ENCODE measurements at regions of chr9 and their contacts with region 1.

Region 1: DNA sequence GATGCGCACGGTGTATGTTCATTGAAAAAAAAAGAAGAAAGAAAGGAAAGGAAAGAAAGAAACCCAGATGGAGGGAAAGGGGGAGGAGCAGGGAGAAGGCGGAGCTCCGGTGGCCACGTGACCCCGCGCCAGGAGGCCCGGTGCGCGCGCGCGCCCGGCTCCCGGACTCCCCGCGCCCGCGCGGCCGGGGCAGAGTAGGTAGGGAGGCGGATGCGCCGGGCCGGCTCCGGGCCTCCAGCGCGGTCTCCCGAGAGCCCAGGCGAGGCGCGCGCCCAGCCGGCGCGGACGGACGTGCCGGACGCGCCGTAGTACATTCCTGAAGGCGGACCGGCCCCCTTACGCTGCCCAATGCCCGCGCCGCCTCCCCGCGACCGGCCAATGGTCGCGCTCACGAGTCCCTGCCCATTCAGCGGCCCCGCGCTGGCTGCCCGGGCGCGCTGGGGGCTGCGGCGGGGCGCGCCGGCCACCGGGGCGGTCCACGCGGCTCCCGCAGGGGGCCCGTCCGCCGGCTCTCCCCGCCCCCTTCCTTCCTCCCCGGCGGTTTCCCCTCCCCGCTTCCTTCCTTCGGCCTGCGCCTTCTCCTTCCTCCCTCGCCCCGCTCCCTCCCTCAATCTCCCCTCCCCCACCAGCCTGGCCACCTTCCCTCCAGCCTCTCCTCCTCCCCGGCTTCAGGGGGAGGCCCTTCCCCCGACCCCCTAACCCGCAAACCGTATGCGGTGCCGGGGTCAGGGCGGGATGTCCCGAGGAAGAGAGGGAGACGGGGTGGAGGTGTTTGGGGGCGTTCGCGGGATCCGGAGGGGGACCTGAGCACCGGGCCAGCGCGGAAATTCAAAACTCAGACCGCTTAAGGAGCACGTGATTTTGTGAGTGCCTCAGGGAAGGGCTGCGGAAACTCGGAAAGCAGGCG is 5.8 kb downstream of the PTCH1 start:
- DNase-seq: peak; percentile 84 to 98
- H3K4me3 ChIP-seq: peak overlapping the region; percentile 98
- H3K27ac ChIP-seq: peak overlapping the region; percentile 80
- H3K4me1 ChIP-seq: peaks cover 12% of the 10 kb centered on the region; the same call in 1 of the 2 replicates
- H3K27me3 ChIP-seq: no peaks in the 10 kb centered on the region
- CTCF ChIP-seq: no peak

Region 2: DNA sequence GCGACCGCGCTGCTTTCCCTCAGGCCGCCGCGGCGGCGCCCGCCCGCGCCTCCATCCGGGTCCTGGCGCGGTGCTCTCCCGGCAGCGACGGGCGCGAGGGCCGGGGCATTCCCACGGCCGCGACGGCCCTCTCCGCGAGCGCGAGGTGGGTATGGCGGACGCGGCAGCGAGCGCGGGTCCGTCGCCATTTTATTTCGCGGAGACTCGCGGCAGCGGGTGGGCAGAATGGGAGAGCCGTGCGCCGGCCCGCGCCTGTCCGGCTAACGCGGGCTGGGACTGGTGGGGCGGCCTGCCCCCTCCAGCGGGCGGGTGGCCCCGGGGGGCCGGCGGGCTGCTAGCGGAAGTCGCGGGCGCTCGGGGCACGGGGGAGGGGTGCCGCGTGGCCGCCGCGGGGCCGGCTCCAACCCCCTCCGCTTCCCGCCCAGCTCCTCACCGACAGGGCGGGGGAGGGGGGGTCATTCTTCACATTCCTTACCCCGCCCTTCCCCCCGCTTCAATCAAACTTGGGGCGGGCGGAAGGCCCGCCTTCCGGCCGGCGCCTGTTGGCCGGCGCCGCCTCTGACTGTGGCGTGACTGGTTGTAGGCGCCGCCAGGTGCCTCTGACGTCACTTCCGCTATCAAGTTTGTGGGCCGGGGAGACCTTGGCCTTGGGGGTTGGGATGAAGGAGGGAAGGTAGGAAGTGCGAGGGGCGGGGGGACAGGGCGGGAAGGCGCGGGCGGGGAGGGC is 1344.6 kb before region 1 on chr9:
- CTCF ChIA-PET with region 1: no interaction called
- POLR2A ChIA-PET with region 1: no interaction called
- intact Hi-C with region 1: loop called (anchors 2 kb)
- DNase-seq: peak; percentile 94 to 98
- H3K4me3 ChIP-seq: peak overlapping the region; percentile 92
- H3K27ac ChIP-seq: peak overlapping the region; percentile 96
- H3K4me1 ChIP-seq: peaks cover 35% of the 10 kb centered on the region
- H3K27me3 ChIP-seq: no peaks in the 10 kb centered on the region
- CTCF ChIP-seq: no peak

Region 3: DNA sequence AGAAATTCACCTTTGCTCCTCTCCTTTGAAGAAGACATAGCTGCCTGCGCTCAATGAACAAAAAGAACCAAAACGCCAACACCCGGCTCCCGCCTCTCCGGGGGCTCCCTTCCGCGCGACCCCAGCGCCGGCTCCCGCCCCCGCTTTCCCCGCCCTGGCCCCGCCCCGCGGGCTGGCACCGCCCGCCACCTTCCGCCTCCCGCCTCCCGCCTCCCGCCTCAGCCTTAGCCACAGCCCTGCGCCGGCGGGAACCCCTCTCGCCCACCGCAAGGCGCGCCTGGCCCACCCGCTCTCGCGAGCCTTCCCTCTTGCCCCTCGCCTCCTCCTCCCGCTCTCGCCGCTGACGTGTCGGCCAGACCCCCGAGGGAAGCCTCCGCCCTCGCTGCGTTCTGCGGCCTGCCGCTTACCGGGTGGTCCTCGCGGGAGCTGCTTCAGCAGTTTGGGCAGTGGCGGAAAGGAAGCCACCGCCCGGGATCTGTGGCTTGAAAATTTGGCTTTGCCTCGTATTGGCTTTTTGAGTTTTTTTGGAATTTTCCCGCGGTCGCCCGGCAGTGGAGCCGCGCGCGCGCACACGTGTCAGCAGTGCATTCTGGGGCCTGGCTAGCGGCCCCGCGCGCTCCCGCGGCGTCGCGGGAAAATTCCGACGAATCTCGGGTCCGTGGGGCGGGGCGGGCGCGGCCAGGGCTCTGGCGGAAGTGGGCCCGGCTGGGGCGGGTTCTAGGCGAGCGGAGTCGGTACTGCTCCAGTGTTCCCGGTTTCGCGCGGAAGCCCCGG is 193.7 kb before region 1 on chr9 and contains the start of gene FANCC:
- CTCF ChIA-PET with region 1: no interaction called
- POLR2A ChIA-PET with region 1: no interaction called
- intact Hi-C with region 1: loop called (anchors 1 kb)
- DNase-seq: peak; percentile 73 to 91
- H3K4me3 ChIP-seq: peak within 1 kb of the TSS; percentile 80
- H3K27ac ChIP-seq: peak within 1 kb of the TSS; percentile 97
- H3K4me1 ChIP-seq: peaks cover 37% of the 10 kb centered on the region
- H3K27me3 ChIP-seq: no peaks in the 10 kb centered on the region
- CTCF ChIP-seq: no peak
- total RNA-seq, gene FANCC: 31.5 and 44.7 TPM in 2 replicates

Region 4: DNA sequence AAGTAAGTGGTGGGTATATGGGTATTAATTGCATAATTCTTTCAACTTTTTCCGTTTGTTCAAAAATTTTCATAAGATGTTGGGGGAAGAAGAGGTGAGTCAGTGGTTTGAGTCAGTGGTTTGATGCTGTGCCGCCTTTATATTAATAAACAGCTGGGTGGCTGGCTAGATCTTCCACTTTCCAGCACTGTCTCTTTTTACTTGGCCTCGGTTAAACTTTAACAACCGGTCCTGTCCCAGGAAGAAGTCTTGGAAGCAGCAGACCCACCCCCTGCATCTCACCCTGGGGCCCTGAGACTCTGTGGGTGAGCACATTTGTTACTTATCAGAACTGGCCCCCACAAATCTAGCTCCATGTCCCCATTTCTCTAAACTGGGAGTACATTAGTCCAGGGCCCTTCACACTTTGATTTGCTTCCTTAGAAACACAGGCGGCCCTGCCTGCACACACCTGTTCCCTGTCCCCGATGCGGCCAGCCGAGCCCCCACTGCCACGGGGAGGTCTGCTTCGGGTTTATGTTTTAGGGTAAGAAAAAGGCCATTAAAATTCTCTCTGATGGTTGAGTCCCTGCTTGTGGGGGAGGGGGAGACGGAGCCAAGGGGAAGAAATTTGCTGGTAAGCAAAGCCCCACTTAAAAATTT is 84.9 kb before region 1 on chr9:
- CTCF ChIA-PET with region 1: no interaction called
- POLR2A ChIA-PET with region 1: no interaction called
- intact Hi-C with region 1: loop called (anchors 2 kb)
- DNase-seq: peak in 1 of 2 experiments; percentile 20
- H3K4me3 ChIP-seq: peak overlapping the region; percentile 92
- H3K27ac ChIP-seq: peak overlapping the region; percentile 87
- H3K4me1 ChIP-seq: peaks cover 12% of the 10 kb centered on the region
- H3K27me3 ChIP-seq: no peaks in the 10 kb centered on the region
- CTCF ChIP-seq: no peak

Region 5: GRCh38 chr9:95620314-95620713 is 109.4 kb after region 1 on chr9:
- CTCF ChIA-PET with region 1: no interaction called
- POLR2A ChIA-PET with region 1: no interaction called
- intact Hi-C with region 1: no loop called
- DNase-seq: no peak
- H3K4me3 ChIP-seq: no peak overlapping the region
- H3K27ac ChIP-seq: no peak overlapping the region
- H3K4me1 ChIP-seq: no peaks in the 10 kb centered on the region
- H3K27me3 ChIP-seq: peaks cover 85% of the 10 kb centered on the region
- CTCF ChIP-seq: no peak

Region 6: GRCh38 chr9:95852059-95853032 is 341.4 kb after region 1 on chr9:
- CTCF ChIA-PET with region 1: no interaction called
- POLR2A ChIA-PET with region 1: no interaction called
- intact Hi-C with region 1: no loop called
- DNase-seq: peak; percentile 11 to 83
- H3K4me3 ChIP-seq: no peak overlapping the region
- H3K27ac ChIP-seq: no peak overlapping the region
- H3K4me1 ChIP-seq: peaks cover 46% of the 10 kb centered on the region
- H3K27me3 ChIP-seq: no peaks in the 10 kb centered on the region
- CTCF ChIP-seq: no peak

Region 7: GRCh38 chr9:95875305-95876137 is 364.6 kb after region 1 on chr9 and contains the start of gene ERCC6L2:
- CTCF ChIA-PET with region 1: no interaction called
- POLR2A ChIA-PET with region 1: no interaction called
- intact Hi-C with region 1: loop called (anchors 5 kb)
- DNase-seq: peak; percentile 93 to 96
- H3K4me3 ChIP-seq: no peak within 1 kb of the TSS; the same call in 1 of the 2 replicates
- H3K27ac ChIP-seq: no peak within 1 kb of the TSS; the same call in 1 of the 2 replicates
- H3K4me1 ChIP-seq: peaks cover 11% of the 10 kb centered on the region
- H3K27me3 ChIP-seq: no peaks in the 10 kb centered on the region
- CTCF ChIP-seq: no peak
- total RNA-seq, gene ERCC6L2: 38.1 and 41.4 TPM in 2 replicates

Region 8: GRCh38 chr9:96619491-96620154 is 1108.7 kb after region 1 on chr9 and contains the start of gene CDC14B:
- CTCF ChIA-PET with region 1: no interaction called
- POLR2A ChIA-PET with region 1: no interaction called
- intact Hi-C with region 1: loop called (anchors 10 kb)
- DNase-seq: peak; percentile 96 to 98
- H3K4me3 ChIP-seq: peak within 1 kb of the TSS; percentile 88
- H3K27ac ChIP-seq: peak within 1 kb of the TSS; percentile 67
- H3K4me1 ChIP-seq: peaks cover 36% of the 10 kb centered on the region
- H3K27me3 ChIP-seq: no peaks in the 10 kb centered on the region
- CTCF ChIP-seq: no peak
- total RNA-seq, gene CDC14B: 43.3 and 47.2 TPM in 2 replicates

Measured in PC-9 (cell line).